ENCODE measurements at regions of chr22 and their contacts with region 1.

Region 1: GRCh38 chr22:17171313-17172171 is 12.5 kb upstream of the HDHD5 start:
- DNase-seq: peak; percentile 96
- H3K4me3 ChIP-seq: peak overlapping the region; percentile 59 to 99
- H3K27ac ChIP-seq: peak overlapping the region; percentile 72 to 82
- H3K4me1 ChIP-seq: peaks cover 0 to 3% of the 10 kb centered on the region in 2 experiments; a peak in 1 of 4 replicates
- H3K27me3 ChIP-seq: no peaks in the 10 kb centered on the region
- CTCF ChIP-seq: peak; percentile 90
- EP300 ChIP-seq: no peak
- RAD21 ChIP-seq: peak; percentile 55

Region 2: DNA sequence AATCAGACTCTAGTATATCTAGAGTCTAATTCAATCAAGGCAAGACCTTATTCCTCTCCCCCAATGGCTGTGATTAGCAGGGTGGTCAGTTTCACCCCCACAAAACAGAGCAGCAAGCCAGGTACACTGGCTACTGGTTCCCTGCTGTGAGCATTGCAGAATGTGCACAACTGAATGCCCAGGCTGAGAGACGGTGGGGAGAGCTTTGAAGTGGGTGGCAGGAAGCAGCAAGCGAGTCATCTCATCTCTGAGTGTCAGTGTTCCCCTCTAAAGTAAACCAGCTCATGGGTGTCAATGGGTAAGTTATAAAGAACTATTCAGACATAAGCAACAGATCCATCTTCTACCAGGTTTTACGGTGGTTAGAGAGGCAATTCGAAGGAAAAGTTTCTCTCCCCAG is 201.1 kb before region 1 on chr22:
- CTCF ChIA-PET with region 1: no interaction called
- POLR2A ChIA-PET with region 1: no interaction called
- DNase-seq: no peak
- H3K4me3 ChIP-seq: no peak overlapping the region
- H3K27ac ChIP-seq: no peak overlapping the region
- H3K4me1 ChIP-seq: no peaks in the 10 kb centered on the region
- H3K27me3 ChIP-seq: 0 out of 2 replicates have a peak, but pooled peaks cover 4% of the 10 kb centered on the region
- CTCF ChIP-seq: no peak
- EP300 ChIP-seq: no peak
- RAD21 ChIP-seq: no peak

Region 3: DNA sequence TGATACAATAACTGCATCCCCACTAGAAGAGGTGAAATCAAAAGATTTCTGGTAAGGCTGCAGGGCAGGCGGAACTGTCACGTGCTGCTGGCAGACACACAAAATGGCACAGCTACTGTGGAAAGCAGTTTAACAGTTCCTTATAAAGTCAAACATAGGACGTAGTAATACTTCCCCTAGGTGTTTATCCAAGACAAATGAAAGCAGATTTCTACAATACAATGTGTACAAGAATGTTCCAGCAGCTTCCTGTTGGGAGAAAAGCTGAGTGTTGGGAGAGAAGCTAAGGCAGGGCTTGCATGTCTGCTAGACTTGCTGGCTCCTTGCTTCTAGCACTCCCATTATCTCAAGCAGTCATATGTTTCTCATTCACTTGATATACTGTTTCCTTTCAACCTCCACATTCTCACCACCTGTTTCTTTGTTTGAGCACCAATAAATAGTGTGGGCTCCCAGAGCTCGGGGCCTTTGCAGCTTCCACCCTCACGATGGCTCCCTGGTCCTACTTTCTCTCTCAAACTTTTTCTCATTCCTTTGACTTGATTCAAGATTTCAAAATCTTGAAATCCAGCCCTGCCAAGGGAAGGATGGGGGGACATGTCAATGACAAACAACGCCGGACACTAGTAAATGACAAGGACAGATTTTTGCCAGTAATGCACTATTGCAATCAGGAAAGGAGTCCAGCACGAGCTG is 108.0 kb before region 1 on chr22:
- CTCF ChIA-PET with region 1: interaction called, 10 read pairs
- POLR2A ChIA-PET with region 1: no interaction called
- DNase-seq: no peak
- H3K4me3 ChIP-seq: no peak overlapping the region
- H3K27ac ChIP-seq: no peak overlapping the region
- H3K4me1 ChIP-seq: no peaks in the 10 kb centered on the region
- H3K27me3 ChIP-seq: peaks cover 43% of the 10 kb centered on the region
- CTCF ChIP-seq: no peak
- EP300 ChIP-seq: no peak
- RAD21 ChIP-seq: no peak

Region 4: GRCh38 chr22:17106785-17107546 is 64.6 kb before region 1 on chr22:
- CTCF ChIA-PET with region 1: interaction called, 15 read pairs
- POLR2A ChIA-PET with region 1: no interaction called
- DNase-seq: no peak
- H3K4me3 ChIP-seq: no peak overlapping the region
- H3K27ac ChIP-seq: no peak overlapping the region
- H3K4me1 ChIP-seq: no peaks in the 10 kb centered on the region
- H3K27me3 ChIP-seq: no peaks in the 10 kb centered on the region
- CTCF ChIP-seq: no peak
- EP300 ChIP-seq: no peak
- RAD21 ChIP-seq: no peak

Region 5: DNA sequence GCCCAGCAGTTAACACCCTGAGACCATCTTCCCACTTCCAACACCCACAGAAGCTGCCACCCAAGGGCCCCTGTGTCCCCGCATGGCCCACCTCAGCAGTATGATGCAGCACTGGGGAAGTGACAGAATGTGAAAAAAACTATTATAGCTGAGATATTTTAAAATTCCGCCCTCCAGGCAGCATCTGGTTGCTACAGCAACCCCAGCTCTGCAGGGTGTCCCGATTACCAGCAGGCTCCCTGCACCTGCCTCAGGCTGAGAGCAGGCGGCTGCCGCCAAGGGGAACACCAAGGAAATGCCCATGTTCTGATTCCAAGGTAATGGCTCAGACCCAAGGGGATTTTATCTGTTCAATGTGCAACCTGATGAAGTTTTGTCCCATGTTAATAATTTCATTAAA is 39.9 kb before region 1 on chr22:
- CTCF ChIA-PET with region 1: interaction called, 18 read pairs
- POLR2A ChIA-PET with region 1: no interaction called
- DNase-seq: no peak
- H3K4me3 ChIP-seq: no peak overlapping the region
- H3K27ac ChIP-seq: no peak overlapping the region
- H3K4me1 ChIP-seq: no peaks in the 10 kb centered on the region; a peak in 1 of 4 replicates
- H3K27me3 ChIP-seq: no peaks in the 10 kb centered on the region
- CTCF ChIP-seq: no peak
- EP300 ChIP-seq: no peak
- RAD21 ChIP-seq: no peak

Region 6: GRCh38 chr22:17191163-17191784 is 19.7 kb after region 1 on chr22:
- CTCF ChIA-PET with region 1: interaction called, 51 read pairs
- POLR2A ChIA-PET with region 1: interaction called, 4 read pairs
- DNase-seq: no peak
- H3K4me3 ChIP-seq: no peak overlapping the region
- H3K27ac ChIP-seq: no peak overlapping the region
- H3K4me1 ChIP-seq: no peaks in the 10 kb centered on the region
- H3K27me3 ChIP-seq: no peaks in the 10 kb centered on the region
- CTCF ChIP-seq: no peak
- EP300 ChIP-seq: no peak
- RAD21 ChIP-seq: no peak

Region 7: GRCh38 chr22:17486313-17486712 is 314.8 kb after region 1 on chr22:
- CTCF ChIA-PET with region 1: interaction called, 14 read pairs
- POLR2A ChIA-PET with region 1: no interaction called
- DNase-seq: peak; percentile 11
- H3K4me3 ChIP-seq: no peak overlapping the region
- H3K27ac ChIP-seq: no peak overlapping the region
- H3K4me1 ChIP-seq: no peaks in the 10 kb centered on the region
- H3K27me3 ChIP-seq: peaks cover 60% of the 10 kb centered on the region
- CTCF ChIP-seq: no peak
- EP300 ChIP-seq: no peak
- RAD21 ChIP-seq: no peak

Measured in SK-N-SH (cell line).